ENCODE measurements at regions of chr16 and their contacts with region 1.

Region 1: GRCh38 chr16:81723098-81723723 is 55.9 kb upstream of the PLCG2 start:
- DNase-seq: peak in 1 of 3 donors; percentile 87
- ATAC-seq: peak; percentile 87
- H3K4me3 ChIP-seq: no peak overlapping the region
- H3K4me1 ChIP-seq: no peaks in the 10 kb centered on the region
- CTCF ChIP-seq: peak; percentile 20

Region 2: DNA sequence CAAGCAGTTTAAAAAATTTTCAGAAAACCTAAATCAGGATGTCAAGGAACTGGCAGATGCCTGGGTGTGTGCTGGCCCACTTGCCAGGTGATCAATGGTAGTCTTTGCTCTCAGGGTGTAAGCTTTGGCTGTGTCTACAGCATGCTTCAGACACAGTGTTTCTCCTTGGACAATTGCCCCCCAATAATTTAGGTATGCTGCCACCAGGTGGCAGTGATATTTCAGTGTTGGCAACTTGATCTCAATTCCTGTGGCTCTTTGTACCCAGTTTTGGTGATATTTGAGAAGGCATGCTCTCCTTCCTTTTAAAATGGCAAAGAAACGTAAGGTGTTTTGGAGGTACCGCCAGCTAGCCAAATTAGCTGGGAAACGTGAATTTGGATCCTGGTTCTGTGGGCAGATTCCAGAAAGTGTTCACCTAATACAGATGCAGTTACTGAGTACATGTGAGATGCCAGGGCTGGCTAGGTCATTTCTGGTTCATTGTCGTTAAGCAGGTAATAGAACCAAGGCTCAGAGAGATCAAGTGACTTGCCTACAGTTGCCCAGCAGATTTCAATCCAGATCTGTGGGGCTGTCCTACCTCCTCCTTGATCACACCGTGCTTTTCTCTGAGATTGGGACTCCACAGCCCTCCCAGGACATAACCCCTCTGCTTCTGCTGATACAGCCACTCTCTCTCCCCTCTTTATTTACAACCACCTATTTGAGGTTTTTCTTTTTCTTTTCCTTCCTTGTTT is 99.7 kb before region 1 on chr16:
- intact Hi-C with region 1: loop called in 1 of 2 experiments (anchors 5 kb)
- DNase-seq: peak in 1 of 3 donors; percentile 71
- ATAC-seq: peak; percentile 29
- H3K4me3 ChIP-seq: no peak overlapping the region
- H3K4me1 ChIP-seq: peaks cover 7% of the 10 kb centered on the region
- CTCF ChIP-seq: no peak